ENCODE measurements at regions of chr11 and their contacts with region 1.

Region 1: DNA sequence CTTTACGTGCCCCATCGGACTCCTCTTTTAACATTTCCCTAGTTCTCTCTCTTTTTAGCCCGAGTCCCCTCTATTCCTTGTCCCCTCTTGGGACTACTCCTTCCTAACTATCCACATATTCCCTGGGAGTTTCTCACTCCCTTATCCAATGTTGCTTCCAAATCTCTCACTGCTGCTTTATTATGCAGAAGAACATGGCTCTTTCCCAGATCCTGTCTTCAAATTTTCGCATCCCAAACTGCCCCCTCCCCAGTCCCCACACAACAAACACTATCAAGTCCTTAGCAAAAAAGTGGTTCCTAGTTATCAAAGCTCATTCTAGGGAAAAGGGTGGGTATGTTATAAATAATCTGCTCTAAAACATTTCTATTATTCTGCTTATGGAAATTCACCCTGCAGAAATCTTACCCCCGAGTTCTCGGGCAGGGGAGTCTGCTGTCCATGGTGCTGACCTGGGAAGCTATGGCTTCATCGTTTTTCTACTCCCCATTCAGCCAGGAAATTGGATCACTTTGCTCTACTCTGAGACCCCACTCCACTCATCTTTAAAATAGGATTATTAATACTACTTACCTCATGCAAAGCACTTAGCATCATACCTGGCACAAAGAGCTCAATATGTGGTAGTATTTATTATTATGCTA is 393.5 kb downstream of the BUD13 start:
- DNase-seq: peak; percentile 57 to 87
- H3K4me3 ChIP-seq: no peak overlapping the region
- H3K4me3 Mint-ChIP-seq: no peak overlapping the region
- H3K27ac Mint-ChIP-seq: no peak overlapping the region
- H3K4me1 ChIP-seq: peaks cover 22% of the 10 kb centered on the region
- H3K4me1 Mint-ChIP-seq: peaks cover 17% of the 10 kb centered on the region
- H3K27me3 ChIP-seq: no peaks in the 10 kb centered on the region
- H3K27me3 Mint-ChIP-seq: peaks cover 19% of the 10 kb centered on the region
- CTCF ChIP-seq: no peak

Region 2: GRCh38 chr11:116366980-116367645 is 12.2 kb before region 1 on chr11:
- CTCF ChIA-PET with region 1: interaction called, 6 read pairs
- POLR2A ChIA-PET with region 1: no interaction called
- intact Hi-C with region 1: loop called (anchors 1 kb)
- DNase-seq: peak; percentile 76 to 87
- H3K4me3 ChIP-seq: no peak overlapping the region
- H3K4me3 Mint-ChIP-seq: no peak overlapping the region
- H3K27ac Mint-ChIP-seq: peak overlapping the region; percentile 43
- H3K4me1 ChIP-seq: peaks cover 13% of the 10 kb centered on the region
- H3K4me1 Mint-ChIP-seq: peaks cover 11% of the 10 kb centered on the region
- H3K27me3 ChIP-seq: no peaks in the 10 kb centered on the region
- H3K27me3 Mint-ChIP-seq: peaks cover 3% of the 10 kb centered on the region
- CTCF ChIP-seq: no peak

Region 3: DNA sequence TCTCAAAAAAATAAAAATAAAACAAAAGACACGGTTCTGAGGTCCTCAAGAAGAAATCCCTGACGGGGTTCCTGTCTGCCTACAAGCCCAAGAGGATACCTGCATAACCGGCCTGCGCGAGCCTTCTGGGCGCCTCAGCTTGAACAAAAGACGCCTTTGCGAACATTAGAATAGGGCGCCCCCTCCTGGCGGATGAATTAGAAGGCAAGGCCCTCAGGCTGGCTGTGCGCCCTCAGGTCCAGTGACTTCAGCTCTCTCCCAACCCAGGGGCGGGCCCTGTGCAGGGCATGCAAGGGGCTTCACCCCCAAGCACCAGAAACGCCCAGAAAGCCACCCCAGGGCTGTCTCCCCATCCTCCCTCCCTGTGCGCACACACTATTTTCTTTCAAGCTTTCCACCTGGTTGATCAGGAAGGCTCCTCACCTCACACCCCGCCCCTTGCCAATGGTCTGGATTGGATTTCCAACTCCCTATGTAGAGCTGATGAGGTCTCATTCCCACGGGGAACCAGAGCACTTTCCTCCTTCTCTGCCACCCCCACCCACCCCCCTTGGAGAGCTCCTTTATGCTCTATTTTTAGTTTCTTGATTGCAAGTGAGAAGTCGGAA is 120.2 kb after region 1 on chr11:
- CTCF ChIA-PET with region 1: interaction called, 3 read pairs
- POLR2A ChIA-PET with region 1: no interaction called
- intact Hi-C with region 1: loop called (anchors 5 kb)
- DNase-seq: peak; percentile 89 to 92
- H3K4me3 ChIP-seq: no peak overlapping the region
- H3K4me3 Mint-ChIP-seq: no peak overlapping the region
- H3K27ac Mint-ChIP-seq: no peak overlapping the region
- H3K4me1 ChIP-seq: peaks cover 7% of the 10 kb centered on the region; the same call in 1 of the 2 replicates
- H3K4me1 Mint-ChIP-seq: no peaks in the 10 kb centered on the region
- H3K27me3 ChIP-seq: no peaks in the 10 kb centered on the region
- H3K27me3 Mint-ChIP-seq: peaks cover 3% of the 10 kb centered on the region
- CTCF ChIP-seq: peak; percentile 86 to 93

Region 4: DNA sequence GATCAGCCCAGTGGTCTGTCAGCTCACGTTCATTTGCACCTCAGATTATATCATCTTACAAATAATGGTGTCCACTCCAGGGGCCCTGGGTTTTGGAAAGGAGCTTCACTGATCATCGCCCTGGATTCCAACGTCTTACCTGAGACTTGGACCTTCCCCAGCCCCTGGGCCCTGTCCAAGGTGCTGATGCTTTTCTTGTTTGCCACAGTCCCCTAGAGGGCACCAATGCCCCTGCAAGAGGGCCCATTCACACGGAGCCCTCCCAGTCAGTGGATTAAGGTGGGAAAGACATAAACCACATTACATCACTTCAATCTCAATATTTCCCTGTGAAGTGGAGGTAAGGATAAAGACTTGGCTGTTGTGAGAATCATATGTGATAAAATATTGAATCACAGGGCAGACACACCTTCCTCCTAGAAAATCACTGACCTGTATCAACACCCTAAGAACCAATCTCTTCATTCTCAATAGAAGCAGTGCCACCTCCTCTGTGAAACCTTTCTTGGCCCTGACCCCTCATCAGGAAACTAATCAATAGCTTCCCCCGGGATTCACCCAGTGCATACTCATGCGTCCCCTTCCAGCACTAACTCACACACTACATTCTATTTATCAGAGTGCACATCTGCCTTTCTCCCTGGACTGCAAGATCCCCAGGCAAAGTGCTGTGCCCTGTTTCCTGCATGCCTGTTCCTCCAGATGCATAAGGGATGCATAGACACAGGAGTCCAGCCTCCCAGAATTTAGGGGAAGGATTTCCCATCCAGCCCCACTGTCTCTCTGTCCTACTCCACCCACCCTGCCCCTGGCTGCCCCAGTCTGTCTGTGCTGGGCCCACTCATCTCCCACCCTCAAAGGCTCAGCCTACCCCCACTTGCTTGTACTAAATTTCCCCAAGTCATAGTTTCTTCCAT is 226.5 kb after region 1 on chr11:
- CTCF ChIA-PET with region 1: no interaction called
- POLR2A ChIA-PET with region 1: no interaction called
- intact Hi-C with region 1: loop called (anchors 1 kb)
- DNase-seq: peak; percentile 88 to 93
- H3K4me3 ChIP-seq: no peak overlapping the region
- H3K4me3 Mint-ChIP-seq: no peak overlapping the region
- H3K27ac Mint-ChIP-seq: no peak overlapping the region
- H3K4me1 ChIP-seq: peaks cover 8% of the 10 kb centered on the region; the same call in 1 of the 2 replicates
- H3K4me1 Mint-ChIP-seq: no peaks in the 10 kb centered on the region
- H3K27me3 ChIP-seq: 0 out of 2 replicates have a peak, but pooled peaks cover under 1% of the 10 kb centered on the region
- H3K27me3 Mint-ChIP-seq: peaks cover 7% of the 10 kb centered on the region
- CTCF ChIP-seq: peak; percentile 86 to 93